ENCODE measurements at regions of chr7 and their contacts with region 1.

Region 1: GRCh38 chr7:30564243-30564892 is 30.3 kb upstream of the GARS1 start:
- DNase-seq: peak; percentile 72 to 81
- ATAC-seq: peak; percentile 88 to 94 (median 93)
- H3K4me3 ChIP-seq: no peak overlapping the region
- H3K27ac ChIP-seq: no peak overlapping the region
- H3K4me1 ChIP-seq: peaks cover 0 to 21% (median 0%) of the 10 kb centered on the region in 9 donors
- H3K27me3 ChIP-seq: no peaks in the 10 kb centered on the region
- CTCF ChIP-seq: peak; percentile 69 to 89 (median 86)

Region 2: GRCh38 chr7:29955799-29956486 is 608.4 kb before region 1 on chr7:
- intact Hi-C with region 1: loop called in 1 of 10 experiments (anchors 5 kb)
- DNase-seq: no peak
- ATAC-seq: peak in 2 of 8 donors; percentile 36 to 40
- H3K4me3 ChIP-seq: no peak overlapping the region
- H3K27ac ChIP-seq: peak overlapping the region in 3 of 10 donors; percentile 54 to 69 (median 69)
- H3K4me1 ChIP-seq: peaks cover 0 to 31% (median 0%) of the 10 kb centered on the region in 9 donors
- H3K27me3 ChIP-seq: no peaks in the 10 kb centered on the region
- CTCF ChIP-seq: no peak

Region 3: DNA sequence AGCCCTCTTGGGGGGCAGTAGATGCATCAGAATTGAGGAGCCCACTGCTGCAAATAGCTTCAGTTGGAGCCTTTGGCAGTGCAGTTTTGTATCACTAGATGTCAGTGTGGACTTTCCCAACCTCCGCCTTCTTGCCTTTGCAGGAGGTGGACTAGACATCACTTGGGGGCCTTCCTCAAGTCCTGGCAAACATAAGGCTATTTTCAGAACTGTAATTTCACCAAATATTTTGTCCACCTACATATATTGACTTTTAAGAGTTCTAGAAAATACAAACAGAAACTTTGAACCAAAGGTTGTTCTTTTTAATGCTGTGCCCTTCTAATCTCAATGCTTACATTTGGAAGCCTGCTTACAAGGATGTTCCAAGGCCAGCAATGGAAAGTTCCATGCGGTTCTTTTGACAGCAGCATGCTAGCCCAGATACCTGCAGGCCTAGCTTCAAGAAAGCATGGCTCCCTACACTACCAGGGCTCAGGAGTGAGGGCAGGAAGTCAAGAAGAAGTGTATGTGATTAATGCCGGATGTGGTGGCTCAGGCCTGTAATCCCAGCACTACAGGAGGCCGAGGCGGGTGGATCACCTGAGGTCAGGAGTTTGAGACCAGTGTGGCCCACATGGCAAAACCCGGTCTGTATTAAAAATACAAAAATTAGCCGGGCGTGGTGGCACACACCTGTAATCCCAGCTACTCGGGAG is 288.0 kb before region 1 on chr7:
- intact Hi-C with region 1: loop called (anchors 2 to 10 kb)
- DNase-seq: peak in 1 of 2 donors; percentile 59
- ATAC-seq: peak; percentile 64 to 85 (median 76)
- H3K4me3 ChIP-seq: no peak overlapping the region
- H3K27ac ChIP-seq: no peak overlapping the region
- H3K4me1 ChIP-seq: peaks cover 0 to 22% (median 0%) of the 10 kb centered on the region in 9 donors
- H3K27me3 ChIP-seq: no peaks in the 10 kb centered on the region
- CTCF ChIP-seq: peak; percentile 40 to 78 (median 66)

Region 4: DNA sequence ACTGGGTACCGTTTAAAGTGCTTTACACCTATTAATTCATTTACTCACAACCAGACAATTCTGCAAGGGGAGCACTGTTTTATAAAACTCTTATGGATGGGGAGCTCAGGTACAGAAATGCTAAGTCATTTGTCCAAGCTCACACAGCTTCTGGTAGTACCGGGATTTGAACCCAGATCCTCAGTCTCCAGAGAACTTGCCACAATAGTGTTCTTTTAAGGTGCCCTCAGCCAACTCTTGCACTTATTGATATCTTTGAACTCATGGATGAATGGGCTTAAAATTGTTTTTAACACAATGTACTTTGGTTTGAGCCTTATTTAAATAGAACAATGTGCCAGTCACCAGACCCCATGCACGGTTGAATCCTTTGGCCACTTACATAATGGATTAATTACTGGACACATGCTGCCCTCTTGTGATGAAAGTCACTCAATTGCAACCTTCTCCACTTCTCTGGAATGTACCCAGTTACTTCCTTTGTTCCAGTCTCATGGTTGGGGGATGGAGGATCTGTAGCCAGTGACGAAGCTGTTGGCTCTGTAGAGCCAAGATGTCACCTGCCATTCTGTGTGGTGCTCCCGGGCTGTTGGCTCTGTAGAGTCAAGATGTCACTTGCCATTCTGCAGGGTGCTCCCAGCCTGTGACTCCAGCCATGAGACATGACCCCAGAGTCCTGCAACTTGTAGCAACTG is 151.4 kb before region 1 on chr7:
- intact Hi-C with region 1: loop called in 1 of 10 experiments (anchors 10 kb)
- DNase-seq: peak in 1 of 2 donors; percentile 49
- ATAC-seq: peak; percentile 85 to 95 (median 92)
- H3K4me3 ChIP-seq: no peak overlapping the region
- H3K27ac ChIP-seq: no peak overlapping the region
- H3K4me1 ChIP-seq: peaks cover 0 to 26% (median 0%) of the 10 kb centered on the region in 9 donors
- H3K27me3 ChIP-seq: no peaks in the 10 kb centered on the region
- CTCF ChIP-seq: peak; percentile 27 to 78 (median 68)

Region 5: GRCh38 chr7:30510124-30511075 is 54.0 kb before region 1 on chr7:
- intact Hi-C with region 1: loop called in 6 of 10 experiments (anchors 2 to 10 kb)
- DNase-seq: no peak
- ATAC-seq: peak in 1 of 8 donors; percentile 60
- H3K4me3 ChIP-seq: no peak overlapping the region
- H3K27ac ChIP-seq: no peak overlapping the region
- H3K4me1 ChIP-seq: peaks cover 0 to 16% (median under 1%) of the 10 kb centered on the region in 9 donors
- H3K27me3 ChIP-seq: no peaks in the 10 kb centered on the region
- CTCF ChIP-seq: peak; percentile 43 to 84 (median 77)

Region 6: GRCh38 chr7:30717181-30717580 is 152.8 kb after region 1 on chr7:
- intact Hi-C with region 1: no loop called
- DNase-seq: no peak
- ATAC-seq: peak in 2 of 8 donors; percentile 37 to 55
- H3K4me3 ChIP-seq: no peak overlapping the region
- H3K27ac ChIP-seq: no peak overlapping the region
- H3K4me1 ChIP-seq: no peaks in the 10 kb centered on the region
- H3K27me3 ChIP-seq: no peaks in the 10 kb centered on the region
- CTCF ChIP-seq: peak in 1 of 9 donors; percentile 22